Heart right ventricle (tissue), 16 donors: ENCODE measurements at regions of chr22 and their contacts with region 1.

Region 1: DNA sequence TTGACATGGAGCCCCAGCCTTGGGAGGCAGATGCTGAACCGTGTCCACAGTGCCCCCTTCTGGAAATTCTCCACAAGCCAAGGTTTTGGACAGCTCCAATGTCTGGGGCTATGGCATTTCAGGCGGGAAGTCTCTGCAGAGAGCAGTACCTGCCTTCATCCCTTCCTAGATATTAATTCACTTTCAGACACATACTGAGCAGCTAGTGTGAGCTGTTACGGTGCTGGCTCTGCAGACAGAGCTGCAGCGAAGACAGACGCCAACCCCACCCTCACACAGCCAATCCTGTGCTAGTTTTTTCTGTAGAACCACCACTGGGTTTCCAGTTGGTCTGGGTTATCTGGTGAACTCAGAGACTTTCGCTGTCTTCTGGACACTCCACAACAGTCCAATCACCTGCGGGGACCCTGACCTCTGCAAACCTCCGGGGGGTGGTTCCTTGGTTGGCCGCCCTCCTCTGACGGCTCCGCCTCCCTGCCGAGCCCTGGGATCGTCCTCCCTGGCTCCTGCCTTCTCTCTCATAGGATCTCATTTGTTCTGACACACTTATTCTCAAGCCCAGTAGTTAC is 9.1 kb downstream of the LMF2 start:
- DNase-seq: peak in 1 of 2 donors; percentile 63
- ATAC-seq: peak; percentile 62 to 84 (median 72)
- H3K4me3 ChIP-seq: no peak overlapping the region
- H3K27ac ChIP-seq: no peak overlapping the region
- H3K4me1 ChIP-seq: peaks cover 0 to 7% (median 0%) of the 10 kb centered on the region in 9 donors
- H3K27me3 ChIP-seq: peaks cover 0 to 10% (median 0%) of the 10 kb centered on the region in 7 donors
- CTCF ChIP-seq: peak in 8 of 9 donors; percentile 17 to 69 (median 64)

Region 2: GRCh38 chr22:50250555-50251476 is 247.6 kb before region 1 on chr22 and contains the start of gene HDAC10:
- intact Hi-C with region 1: loop called in 5 of 10 experiments (anchors 5 to 10 kb)
- DNase-seq: peak; percentile 69 to 85
- ATAC-seq: peak; percentile 64 to 86 (median 74)
- H3K4me3 ChIP-seq: peak within 1 kb of the TSS; percentile 52 to 94 (median 77)
- H3K27ac ChIP-seq: peak within 1 kb of the TSS; percentile 19 to 85 (median 72)
- H3K4me1 ChIP-seq: peaks cover 13 to 48% (median 33%) of the 10 kb centered on the region in 9 donors
- H3K27me3 ChIP-seq: no peaks in the 10 kb centered on the region
- CTCF ChIP-seq: no peak
- total RNA-seq, gene HDAC10: 7.1 to 16.7 (median 10.3) TPM